Vagina (tissue), 2 donors: ENCODE measurements at regions of chr4 and their contacts with region 1.

Region 1: GRCh38 chr4:7067452-7068278 is at the start of gene GRPEL1:
- DNase-seq: peak; percentile 99 to 100
- H3K4me3 ChIP-seq: peak within 1 kb of the TSS; percentile 85 to 97
- H3K27ac ChIP-seq: peak within 1 kb of the TSS; percentile 86
- H3K4me1 ChIP-seq: peaks cover 39% of the 10 kb centered on the region
- H3K27me3 ChIP-seq: no peaks in the 10 kb centered on the region
- CTCF ChIP-seq: no peak
- POLR2A ChIP-seq: peak; percentile 1 to 95
- total RNA-seq, gene GRPEL1: 11.0 TPM

Region 2: GRCh38 chr4:6974138-6974848 is 93.4 kb before region 1 on chr4:
- intact Hi-C with region 1: loop called (anchors 5 kb)
- DNase-seq: peak in 1 of 2 donors; percentile 91
- H3K4me3 ChIP-seq: no peak overlapping the region
- H3K27ac ChIP-seq: no peak overlapping the region
- H3K4me1 ChIP-seq: no peaks in the 10 kb centered on the region
- H3K27me3 ChIP-seq: no peaks in the 10 kb centered on the region
- CTCF ChIP-seq: peak; percentile 97 to 99 (median 99)
- POLR2A ChIP-seq: no peak

Region 3: DNA sequence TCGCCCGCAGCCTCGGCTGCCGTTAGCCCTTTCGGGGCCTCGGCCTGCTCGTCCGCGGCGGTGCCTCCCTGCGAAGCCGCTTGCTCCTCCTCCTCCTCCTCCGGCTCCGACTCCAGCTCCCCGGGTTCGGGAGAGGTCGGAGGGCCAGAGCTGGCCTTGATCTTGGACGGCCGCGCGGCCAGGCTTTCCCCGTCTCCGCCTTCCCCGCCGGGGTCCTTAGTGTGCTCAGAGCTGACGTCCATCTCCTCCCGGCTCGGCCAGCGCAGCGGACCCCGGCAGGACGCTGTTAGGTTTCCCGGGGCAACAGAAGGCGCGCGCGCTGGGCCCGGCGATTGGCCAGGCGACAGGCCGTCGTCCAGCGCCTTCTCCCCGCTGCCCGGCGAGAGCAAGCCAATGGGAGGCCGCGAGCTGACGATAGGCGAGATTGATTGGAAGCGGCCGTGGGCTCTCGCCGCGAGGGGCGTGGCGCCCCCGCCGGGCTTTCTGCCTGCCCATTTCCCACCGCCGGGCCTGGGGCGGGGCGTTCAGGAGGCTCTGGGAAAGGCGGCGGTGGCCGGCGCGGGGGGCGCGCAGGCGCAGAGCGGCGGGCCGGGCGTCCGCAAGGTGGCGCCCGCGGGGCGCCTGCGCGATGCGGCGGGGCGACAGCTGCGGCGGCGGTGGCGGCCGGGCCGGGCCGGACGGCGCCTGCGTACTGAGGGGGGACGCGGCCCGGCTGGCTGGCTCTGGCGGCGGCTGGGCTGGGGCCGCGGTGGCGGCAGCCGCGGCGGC is 24.8 kb before region 1 on chr4 and contains the start of gene TADA2B:
- intact Hi-C with region 1: loop called (anchors 2 kb)
- DNase-seq: peak in 1 of 2 donors; percentile 97
- H3K4me3 ChIP-seq: peak within 1 kb of the TSS; percentile 82 to 100
- H3K27ac ChIP-seq: peak within 1 kb of the TSS; percentile 82
- H3K4me1 ChIP-seq: peaks cover 53% of the 10 kb centered on the region
- H3K27me3 ChIP-seq: no peaks in the 10 kb centered on the region
- CTCF ChIP-seq: peak in 1 of 3 experiments; percentile 21
- POLR2A ChIP-seq: no peak
- total RNA-seq, gene TADA2B: 12.0 TPM